ENCODE measurements at regions of chr10 and their contacts with region 1.

Region 1: DNA sequence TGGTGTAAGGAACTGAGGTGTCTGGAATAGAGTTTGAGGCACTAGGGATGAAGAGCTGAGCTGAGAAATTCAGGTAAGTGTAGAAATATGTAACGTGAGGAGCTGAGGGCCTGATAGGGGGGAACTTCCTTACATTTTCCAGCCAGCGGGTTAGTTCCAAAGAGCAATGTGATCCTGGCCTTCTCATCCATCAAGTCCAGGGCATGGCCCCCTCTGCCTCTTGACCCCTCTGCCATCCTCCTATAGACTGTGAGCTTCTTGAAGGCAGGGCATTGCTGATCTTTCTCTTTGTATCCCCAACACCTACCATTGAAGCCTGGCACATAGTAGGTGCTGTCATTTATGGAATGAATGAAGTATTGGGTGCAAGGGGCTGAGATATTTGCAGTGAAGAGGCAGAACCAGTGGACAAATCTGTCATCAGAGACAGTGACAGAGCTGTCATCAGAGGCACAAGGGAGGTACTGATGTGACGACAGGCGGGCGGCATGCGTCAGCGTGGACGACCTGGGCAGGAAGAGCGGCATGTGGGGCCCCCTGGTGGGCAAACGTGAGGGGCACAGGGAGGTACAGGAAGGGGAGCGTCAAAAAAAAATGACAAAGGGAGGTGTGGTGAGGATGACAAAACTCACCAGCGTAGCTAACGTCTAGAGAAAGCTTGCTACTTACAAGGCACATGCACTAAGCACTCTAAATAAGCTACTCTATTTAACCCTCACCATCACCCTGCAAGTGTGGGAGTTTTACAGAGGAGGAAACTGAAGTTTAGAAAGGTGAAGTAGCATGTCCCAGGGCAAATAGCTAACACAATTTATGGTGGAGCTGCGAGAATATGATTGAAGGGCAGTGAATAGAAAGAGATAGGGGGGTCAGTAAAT is 5.2 kb upstream of the CAMK2G start:
- DNase-seq: peak; percentile 90 to 95
- ATAC-seq: peak; percentile 90 to 94 (median 92)
- H3K4me3 ChIP-seq: no peak overlapping the region
- H3K27ac ChIP-seq: peak overlapping the region; percentile 55
- H3K4me1 ChIP-seq: peaks cover 26% of the 10 kb centered on the region
- H3K27me3 ChIP-seq: no peaks in the 10 kb centered on the region
- CTCF ChIP-seq: peak; percentile 98

Region 2: DNA sequence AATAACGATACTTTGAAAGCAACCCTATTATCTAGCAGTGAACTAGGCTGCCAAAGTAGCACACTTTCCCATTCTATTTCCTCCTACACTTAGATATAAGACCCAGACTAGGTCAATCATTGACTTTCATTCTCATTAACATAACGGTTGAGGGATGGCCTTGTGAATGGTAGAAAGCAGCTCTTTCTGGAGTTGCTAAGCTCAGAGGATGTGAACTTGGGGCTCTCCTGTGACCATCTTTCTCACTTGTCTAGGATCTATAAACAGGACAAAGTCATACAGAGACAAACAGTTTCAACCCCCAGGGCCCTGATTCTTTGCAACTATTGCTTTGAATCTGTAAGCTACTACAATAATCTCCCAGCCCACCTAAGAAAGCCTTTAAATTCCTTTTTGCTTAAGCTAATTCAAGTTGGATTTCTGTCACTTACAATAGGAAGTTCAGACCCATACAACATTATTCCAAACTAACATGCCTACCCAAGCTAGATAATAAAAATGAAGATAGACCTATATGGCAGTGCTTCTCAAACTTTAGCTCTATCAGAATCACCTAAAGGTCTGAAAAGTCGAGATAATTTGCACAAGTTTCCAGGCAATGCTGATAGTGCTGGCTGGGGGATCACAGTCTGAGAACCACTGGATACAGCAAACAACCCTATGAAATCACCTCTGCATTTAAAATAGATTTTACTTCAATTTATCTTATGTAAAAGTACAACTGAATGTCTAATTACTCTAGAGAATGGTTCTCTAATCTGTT is 799.6 kb before region 1 on chr10:
- intact Hi-C with region 1: no loop called
- DNase-seq: no peak
- ATAC-seq: no peak
- H3K4me3 ChIP-seq: no peak overlapping the region
- H3K27ac ChIP-seq: no peak overlapping the region
- H3K4me1 ChIP-seq: peaks cover 31% of the 10 kb centered on the region
- H3K27me3 ChIP-seq: no peaks in the 10 kb centered on the region
- CTCF ChIP-seq: no peak

Region 3: DNA sequence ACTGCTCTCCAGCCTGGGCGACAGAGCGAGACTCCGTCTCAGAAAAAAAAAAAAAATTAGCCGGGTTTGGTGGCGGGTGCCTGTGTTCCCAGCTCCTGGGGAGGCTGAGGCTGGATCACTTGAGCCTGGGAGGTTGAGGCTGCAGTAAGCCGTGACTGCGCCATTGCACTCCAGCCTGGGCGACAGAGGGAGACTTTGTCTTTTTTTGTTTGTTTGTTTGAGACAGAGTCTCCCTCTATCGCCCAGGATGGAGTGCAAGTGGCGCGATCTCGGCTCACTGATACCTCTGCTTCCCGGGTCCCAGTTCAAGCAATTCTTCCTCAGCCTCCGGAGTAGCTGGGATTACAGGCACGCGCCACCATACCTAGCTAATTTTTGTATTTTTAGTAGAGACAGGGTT is 774.2 kb before region 1 on chr10:
- intact Hi-C with region 1: loop called in 1 of 2 experiments (anchors 5 kb)
- DNase-seq: no peak
- ATAC-seq: no peak
- H3K4me3 ChIP-seq: no peak overlapping the region
- H3K27ac ChIP-seq: no peak overlapping the region
- H3K4me1 ChIP-seq: peaks cover 5% of the 10 kb centered on the region
- H3K27me3 ChIP-seq: no peaks in the 10 kb centered on the region
- CTCF ChIP-seq: no peak

Region 4: GRCh38 chr10:73848821-73849489 is 30.6 kb before region 1 on chr10:
- intact Hi-C with region 1: loop called (anchors 1 kb)
- DNase-seq: peak; percentile 86 to 92
- ATAC-seq: peak; percentile 89 to 95 (median 91)
- H3K4me3 ChIP-seq: no peak overlapping the region
- H3K27ac ChIP-seq: peak overlapping the region; percentile 58
- H3K4me1 ChIP-seq: peaks cover 4% of the 10 kb centered on the region
- H3K27me3 ChIP-seq: no peaks in the 10 kb centered on the region
- CTCF ChIP-seq: peak; percentile 99